PC-9 (cell line): ENCODE measurements at regions of chr3 and their contacts with region 1.

Region 1: GRCh38 chr3:9352917-9353752 is 9.7 kb upstream of the THUMPD3 start:
- DNase-seq: peak; percentile 62 to 71
- H3K4me3 ChIP-seq: no peak overlapping the region
- H3K27ac ChIP-seq: peak overlapping the region; percentile 48
- H3K4me1 ChIP-seq: peaks cover 69% of the 10 kb centered on the region
- H3K27me3 ChIP-seq: no peaks in the 10 kb centered on the region
- CTCF ChIP-seq: peak; percentile 91

Region 2: DNA sequence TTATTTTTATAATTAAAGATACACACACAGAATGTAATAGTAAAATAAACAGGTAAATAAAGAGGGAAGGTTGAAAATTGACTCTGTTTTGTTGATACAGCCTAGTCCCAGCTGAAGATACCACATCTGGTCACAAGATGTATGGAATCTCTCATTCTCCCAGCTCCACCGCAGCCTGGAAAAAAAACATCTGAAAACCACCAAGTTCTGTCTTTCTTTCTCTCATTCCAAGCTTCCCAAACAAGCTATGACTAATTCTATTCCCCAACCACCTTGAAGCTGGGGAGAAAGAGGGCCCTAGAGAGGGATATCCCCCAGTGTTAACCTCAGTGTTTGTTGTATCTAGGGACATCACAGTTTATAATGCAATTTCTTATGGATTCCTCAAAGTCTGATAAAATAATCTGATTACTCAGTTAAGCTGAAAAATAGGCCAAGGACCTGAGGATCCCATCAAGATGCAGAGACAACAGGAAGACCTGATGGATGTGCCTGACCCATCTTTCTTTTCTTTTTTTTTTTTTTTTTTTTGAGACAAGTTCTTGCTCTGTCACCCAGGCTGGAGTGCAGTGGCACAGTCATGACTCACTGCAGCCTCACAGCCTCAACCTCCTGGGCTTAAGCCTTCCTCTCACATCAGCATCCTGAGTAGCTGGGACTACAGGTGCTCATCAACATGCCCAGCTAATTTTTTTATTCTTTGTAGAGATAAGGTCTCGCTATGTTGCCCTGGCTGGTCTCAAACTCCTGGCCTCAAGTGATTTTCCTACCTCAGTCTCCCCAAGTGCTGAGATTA is 141.8 kb before region 1 on chr3:
- CTCF ChIA-PET with region 1: no interaction called
- POLR2A ChIA-PET with region 1: no interaction called
- intact Hi-C with region 1: no loop called
- DNase-seq: no peak
- H3K4me3 ChIP-seq: no peak overlapping the region
- H3K27ac ChIP-seq: no peak overlapping the region
- H3K4me1 ChIP-seq: peaks cover 14% of the 10 kb centered on the region
- H3K27me3 ChIP-seq: no peaks in the 10 kb centered on the region
- CTCF ChIP-seq: no peak

Region 3: DNA sequence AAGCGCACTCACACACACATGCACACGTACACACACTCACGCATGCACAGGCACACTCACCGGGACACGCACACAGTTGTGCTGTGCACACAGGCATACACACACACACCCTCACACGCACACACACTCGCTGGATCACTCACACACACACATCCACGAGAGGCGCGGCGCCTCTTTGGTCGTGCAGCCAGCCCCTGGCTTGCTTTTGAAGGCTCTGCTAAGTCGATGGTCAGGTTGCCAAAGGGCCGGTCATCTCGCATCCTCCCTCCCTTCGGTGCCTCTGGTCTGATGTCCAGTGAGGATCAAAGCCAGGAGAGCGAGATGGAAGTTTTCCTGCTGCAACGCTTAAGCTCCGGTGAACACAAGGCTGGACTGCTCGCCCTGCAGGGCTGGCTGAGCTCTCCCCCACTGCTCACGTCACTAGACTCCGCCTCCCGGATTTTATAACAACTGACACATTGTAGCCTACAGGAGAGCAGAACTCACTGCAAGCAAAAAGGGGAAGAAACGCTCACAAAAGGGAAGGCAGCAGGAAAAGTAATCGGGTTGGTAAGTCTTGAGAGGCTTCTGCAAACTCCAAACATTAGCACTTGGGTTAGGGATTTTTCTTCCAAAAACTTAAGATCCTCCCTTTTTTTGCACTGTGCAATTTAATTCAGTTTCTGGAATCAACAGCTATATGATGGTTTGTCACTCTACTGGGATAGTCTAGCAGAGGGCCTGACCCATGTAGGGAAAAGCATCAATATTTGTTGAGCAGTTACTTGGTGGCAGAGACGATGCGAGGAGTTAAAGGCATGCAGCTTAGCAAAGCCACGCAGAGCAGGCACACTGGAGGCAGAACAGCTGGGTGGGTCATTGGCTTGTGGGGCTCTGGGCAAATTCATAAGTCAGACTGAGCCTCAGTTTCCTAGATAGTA is 103.6 kb before region 1 on chr3 and contains the start of gene SRGAP3:
- CTCF ChIA-PET with region 1: no interaction called
- POLR2A ChIA-PET with region 1: interaction called, 15 read pairs
- intact Hi-C with region 1: no loop called
- DNase-seq: peak; percentile 80 to 88
- H3K4me3 ChIP-seq: peak within 1 kb of the TSS; percentile 62
- H3K27ac ChIP-seq: no peak within 1 kb of the TSS
- H3K4me1 ChIP-seq: peaks cover 30% of the 10 kb centered on the region
- H3K27me3 ChIP-seq: no peaks in the 10 kb centered on the region
- CTCF ChIP-seq: 0 out of 2 replicates have a peak, but pooled peaks have one; percentile 27
- total RNA-seq, gene SRGAP3: 12.9 and 17.5 TPM in 2 replicates

Region 4: GRCh38 chr3:9396700-9397521 is 43.8 kb after region 1 on chr3:
- CTCF ChIA-PET with region 1: interaction called, 4 read pairs
- POLR2A ChIA-PET with region 1: interaction called, 13 read pairs
- intact Hi-C with region 1: loop called (anchors 5 kb)
- DNase-seq: peak; percentile 95 to 98
- H3K4me3 ChIP-seq: peak overlapping the region; percentile 63
- H3K27ac ChIP-seq: peak overlapping the region; percentile 91
- H3K4me1 ChIP-seq: peaks cover 60% of the 10 kb centered on the region
- H3K27me3 ChIP-seq: no peaks in the 10 kb centered on the region
- CTCF ChIP-seq: no peak